Transverse colon (tissue), 4 donors: ENCODE measurements at regions of chr7 and their contacts with region 1.

Region 1: DNA sequence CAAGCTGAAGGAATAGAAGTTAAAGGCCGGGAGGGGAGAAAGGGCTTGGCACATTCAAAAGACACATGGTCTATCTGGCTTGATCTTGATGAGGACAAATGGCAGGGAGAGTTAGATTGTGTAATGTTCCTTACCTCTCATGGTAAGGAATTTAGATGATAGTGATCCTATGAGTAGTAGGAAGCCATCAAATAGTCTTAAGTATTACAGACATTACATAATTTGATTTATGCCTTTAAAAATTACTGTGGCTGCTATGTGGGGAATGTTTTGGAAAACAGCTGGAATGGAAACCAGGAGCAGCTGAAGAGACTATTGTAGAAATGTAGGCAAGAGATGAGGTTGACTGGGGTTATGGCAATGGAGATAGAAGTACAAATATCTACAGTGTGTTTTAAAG is 351.3 kb upstream of the BMPER start:
- DNase-seq: no peak
- H3K4me3 ChIP-seq: no peak overlapping the region
- H3K27ac ChIP-seq: no peak overlapping the region
- H3K4me1 ChIP-seq: peaks cover 0 to 4% (median 0%) of the 10 kb centered on the region in 4 donors
- H3K27me3 ChIP-seq: no peaks in the 10 kb centered on the region
- CTCF ChIP-seq: no peak
- EP300 ChIP-seq: no peak
- POLR2A ChIP-seq: no peak

Region 2: GRCh38 chr7:33630359-33630758 is 76.3 kb after region 1 on chr7:
- in situ Hi-C with region 1: no loop called
- intact Hi-C with region 1: no loop called
- DNase-seq: no peak
- H3K4me3 ChIP-seq: no peak overlapping the region
- H3K27ac ChIP-seq: no peak overlapping the region
- H3K4me1 ChIP-seq: peaks cover 0 to 9% (median 2%) of the 10 kb centered on the region in 4 donors
- H3K27me3 ChIP-seq: no peaks in the 10 kb centered on the region
- CTCF ChIP-seq: no peak
- EP300 ChIP-seq: no peak
- POLR2A ChIP-seq: no peak

Region 3: GRCh38 chr7:33722383-33723101 is 168.5 kb after region 1 on chr7:
- in situ Hi-C with region 1: no loop called
- intact Hi-C with region 1: loop called (anchors 10 kb)
- DNase-seq: no peak
- H3K4me3 ChIP-seq: no peak overlapping the region
- H3K27ac ChIP-seq: no peak overlapping the region
- H3K4me1 ChIP-seq: no peaks in the 10 kb centered on the region
- H3K27me3 ChIP-seq: no peaks in the 10 kb centered on the region
- CTCF ChIP-seq: no peak
- EP300 ChIP-seq: no peak
- POLR2A ChIP-seq: no peak